Ovary (tissue), 10 donors: ENCODE measurements at regions of chr11 and their contacts with region 1.

Region 1: DNA sequence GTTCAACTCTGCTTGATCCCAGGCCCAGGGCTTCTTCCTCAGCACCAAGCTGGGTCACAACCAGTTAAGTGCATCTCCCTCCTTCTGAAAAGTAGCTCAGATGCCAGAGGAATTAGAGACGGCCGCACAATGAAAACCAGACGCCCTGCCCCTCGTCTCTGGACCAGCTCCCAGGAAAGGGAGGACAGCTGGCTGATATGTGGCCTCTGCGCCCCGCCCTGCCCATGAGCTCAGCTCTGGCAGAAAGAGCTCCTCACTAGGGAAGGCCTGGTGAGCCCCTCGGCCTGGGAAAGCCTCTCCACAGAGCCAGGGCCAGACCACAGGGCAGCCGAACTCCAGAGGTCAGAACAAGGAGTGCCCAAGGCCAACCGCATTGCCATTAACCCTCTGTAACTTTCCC is 18.1 kb upstream of the SCGB1A1 start:
- DNase-seq: peak; percentile 84 to 94 (median 87)
- H3K4me3 ChIP-seq: no peak overlapping the region
- H3K27ac ChIP-seq: peak overlapping the region in 1 of 2 donors; percentile 79
- H3K4me1 ChIP-seq: peaks cover 47% of the 10 kb centered on the region
- H3K27me3 ChIP-seq: no peaks in the 10 kb centered on the region
- CTCF ChIP-seq: no peak
- EP300 ChIP-seq: no peak
- POLR2A ChIP-seq: no peak

Region 2: GRCh38 chr11:62108017-62108750 is 292.6 kb before region 1 on chr11:
- intact Hi-C with region 1: no loop called
- DNase-seq: peak in 1 of 5 donors; percentile 47
- H3K4me3 ChIP-seq: no peak overlapping the region
- H3K27ac ChIP-seq: no peak overlapping the region
- H3K4me1 ChIP-seq: peaks cover 10% of the 10 kb centered on the region
- H3K27me3 ChIP-seq: no peaks in the 10 kb centered on the region
- CTCF ChIP-seq: peak; percentile 80 to 86 (median 85)
- EP300 ChIP-seq: no peak
- POLR2A ChIP-seq: no peak

Region 3: GRCh38 chr11:62542750-62543567 is 142.2 kb after region 1 on chr11:
- intact Hi-C with region 1: loop called in 2 of 4 experiments (anchors 2 to 5 kb)
- DNase-seq: peak; percentile 75 to 86 (median 84)
- H3K4me3 ChIP-seq: peak overlapping the region; percentile 99
- H3K27ac ChIP-seq: peak overlapping the region; percentile 68 to 94
- H3K4me1 ChIP-seq: peaks cover 47% of the 10 kb centered on the region
- H3K27me3 ChIP-seq: no peaks in the 10 kb centered on the region
- CTCF ChIP-seq: peak; percentile 96 to 98 (median 98)
- EP300 ChIP-seq: no peak
- POLR2A ChIP-seq: no peak